ENCODE measurements at regions of chr4 and their contacts with region 1.

Region 1: GRCh38 chr4:7067452-7068278 is at the start of gene GRPEL1:
- DNase-seq: peak; percentile 96 to 99
- H3K4me3 ChIP-seq: peak within 1 kb of the TSS; percentile 90
- H3K27ac ChIP-seq: peak within 1 kb of the TSS; percentile 63
- H3K4me1 ChIP-seq: peaks cover 13% of the 10 kb centered on the region
- H3K27me3 ChIP-seq: no peaks in the 10 kb centered on the region
- CTCF ChIP-seq: no peak
- total RNA-seq, gene GRPEL1: 49.3 and 49.9 TPM in 2 replicates

Region 2: GRCh38 chr4:6974138-6974848 is 93.4 kb before region 1 on chr4:
- CTCF ChIA-PET with region 1: interaction called, 9 read pairs
- POLR2A ChIA-PET with region 1: interaction called, 5 read pairs
- intact Hi-C with region 1: loop called (anchors 1 kb)
- DNase-seq: peak; percentile 62 to 72
- H3K4me3 ChIP-seq: no peak overlapping the region
- H3K27ac ChIP-seq: no peak overlapping the region
- H3K4me1 ChIP-seq: no peaks in the 10 kb centered on the region
- H3K27me3 ChIP-seq: no peaks in the 10 kb centered on the region
- CTCF ChIP-seq: peak; percentile 88

Region 3: GRCh38 chr4:6986781-6987587 is 80.7 kb before region 1 on chr4:
- CTCF ChIA-PET with region 1: interaction called, 11 read pairs
- POLR2A ChIA-PET with region 1: interaction called, 6 read pairs
- intact Hi-C with region 1: loop called (anchors 1 kb)
- DNase-seq: peak; percentile 79 to 96
- H3K4me3 ChIP-seq: peak overlapping the region; percentile 92
- H3K27ac ChIP-seq: peak overlapping the region; percentile 86
- H3K4me1 ChIP-seq: peaks cover 24% of the 10 kb centered on the region
- H3K27me3 ChIP-seq: no peaks in the 10 kb centered on the region
- CTCF ChIP-seq: no peak

Region 4: DNA sequence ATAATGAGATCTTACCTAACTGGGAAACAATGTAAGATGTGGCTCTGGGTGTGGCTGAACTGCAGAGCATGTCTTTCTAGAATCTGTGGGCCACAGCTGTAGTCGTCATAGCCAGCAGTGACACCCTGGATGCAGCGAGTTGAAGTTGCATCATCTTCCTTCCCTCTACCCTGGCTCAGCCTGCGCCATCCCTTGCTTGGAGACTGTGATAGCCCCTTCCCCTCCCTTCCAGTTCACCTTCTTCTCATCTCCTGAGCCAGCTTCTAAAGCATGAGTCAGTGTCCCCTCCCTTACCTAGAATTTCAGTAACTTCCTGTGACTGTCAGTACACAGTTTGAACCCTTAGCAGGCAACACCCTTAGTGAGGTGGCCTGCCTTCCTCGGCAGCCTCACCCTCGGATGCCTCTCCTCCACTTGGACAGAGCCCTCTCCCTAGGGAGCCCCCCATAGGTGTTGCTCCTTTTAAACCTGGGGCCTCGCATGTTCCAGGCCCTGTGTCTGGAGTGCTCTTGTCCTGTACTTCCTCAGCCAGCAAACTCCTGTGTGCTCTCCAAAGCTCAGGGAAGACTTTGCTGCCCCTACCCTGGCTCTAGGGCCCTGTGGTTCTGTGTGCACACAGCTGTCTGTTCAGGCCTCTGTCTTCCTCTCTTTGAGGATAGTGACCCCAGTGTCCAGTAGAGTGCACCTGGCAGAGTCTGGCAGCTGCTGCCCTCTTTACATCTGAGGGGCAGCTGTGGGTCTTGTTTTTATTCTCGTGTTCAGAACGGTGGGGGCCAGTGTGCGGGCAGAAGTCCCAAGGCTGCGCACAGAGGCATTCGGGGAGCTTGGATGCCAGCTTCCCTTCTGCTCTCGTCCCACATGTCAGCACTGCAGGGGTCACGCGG is 68.3 kb before region 1 on chr4:
- CTCF ChIA-PET with region 1: interaction called, 3 read pairs
- POLR2A ChIA-PET with region 1: no interaction called
- intact Hi-C with region 1: loop called (anchors 2 kb)
- DNase-seq: peak; percentile 79 to 93
- H3K4me3 ChIP-seq: no peak overlapping the region
- H3K27ac ChIP-seq: peak overlapping the region; percentile 86
- H3K4me1 ChIP-seq: peaks cover 26% of the 10 kb centered on the region
- H3K27me3 ChIP-seq: no peaks in the 10 kb centered on the region
- CTCF ChIP-seq: no peak

Region 5: DNA sequence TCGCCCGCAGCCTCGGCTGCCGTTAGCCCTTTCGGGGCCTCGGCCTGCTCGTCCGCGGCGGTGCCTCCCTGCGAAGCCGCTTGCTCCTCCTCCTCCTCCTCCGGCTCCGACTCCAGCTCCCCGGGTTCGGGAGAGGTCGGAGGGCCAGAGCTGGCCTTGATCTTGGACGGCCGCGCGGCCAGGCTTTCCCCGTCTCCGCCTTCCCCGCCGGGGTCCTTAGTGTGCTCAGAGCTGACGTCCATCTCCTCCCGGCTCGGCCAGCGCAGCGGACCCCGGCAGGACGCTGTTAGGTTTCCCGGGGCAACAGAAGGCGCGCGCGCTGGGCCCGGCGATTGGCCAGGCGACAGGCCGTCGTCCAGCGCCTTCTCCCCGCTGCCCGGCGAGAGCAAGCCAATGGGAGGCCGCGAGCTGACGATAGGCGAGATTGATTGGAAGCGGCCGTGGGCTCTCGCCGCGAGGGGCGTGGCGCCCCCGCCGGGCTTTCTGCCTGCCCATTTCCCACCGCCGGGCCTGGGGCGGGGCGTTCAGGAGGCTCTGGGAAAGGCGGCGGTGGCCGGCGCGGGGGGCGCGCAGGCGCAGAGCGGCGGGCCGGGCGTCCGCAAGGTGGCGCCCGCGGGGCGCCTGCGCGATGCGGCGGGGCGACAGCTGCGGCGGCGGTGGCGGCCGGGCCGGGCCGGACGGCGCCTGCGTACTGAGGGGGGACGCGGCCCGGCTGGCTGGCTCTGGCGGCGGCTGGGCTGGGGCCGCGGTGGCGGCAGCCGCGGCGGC is 24.8 kb before region 1 on chr4 and contains the start of gene TADA2B:
- CTCF ChIA-PET with region 1: interaction called, 5 read pairs
- POLR2A ChIA-PET with region 1: interaction called, 3 read pairs
- intact Hi-C with region 1: loop called (anchors 1 kb)
- DNase-seq: peak; percentile 87 to 98
- H3K4me3 ChIP-seq: peak within 1 kb of the TSS; percentile 86
- H3K27ac ChIP-seq: no peak within 1 kb of the TSS
- H3K4me1 ChIP-seq: 0 out of 2 replicates have a peak, but pooled peaks cover 16% of the 10 kb centered on the region
- H3K27me3 ChIP-seq: no peaks in the 10 kb centered on the region
- CTCF ChIP-seq: no peak
- total RNA-seq, gene TADA2B: 9.5 and 9.6 TPM in 2 replicates